ENCODE measurements at regions of chr3 and their contacts with region 1.

Region 1: DNA sequence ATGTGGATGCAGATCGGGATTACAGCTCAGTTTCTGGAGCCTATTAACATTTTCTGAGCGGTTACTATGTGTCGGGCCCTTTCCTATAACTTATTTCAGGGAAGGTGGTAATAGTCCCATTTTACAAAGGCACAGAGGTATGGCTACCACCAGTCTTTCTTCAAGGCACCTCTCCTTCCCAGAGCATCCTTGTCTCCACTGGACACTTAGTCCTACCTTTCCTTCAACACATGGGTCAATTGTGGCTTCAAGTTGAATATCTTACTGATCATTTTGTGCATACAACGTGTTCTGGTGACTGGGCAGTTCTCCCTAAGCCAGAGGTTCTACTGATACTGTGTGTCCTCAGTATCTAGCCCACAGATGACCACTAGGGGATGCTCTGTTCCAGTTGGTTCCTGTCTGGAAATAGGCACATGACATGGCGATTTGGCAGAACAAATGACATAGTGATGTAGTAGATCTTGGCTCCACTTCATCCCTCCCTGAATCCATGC is 60.7 kb upstream of the CMTM8 start:
- DNase-seq: peak in 1 of 2 donors; percentile 84
- ATAC-seq: peak; percentile 77 to 96 (median 89)
- H3K4me3 ChIP-seq: no peak overlapping the region
- H3K27ac ChIP-seq: no peak overlapping the region
- H3K4me1 ChIP-seq: peaks cover 2 to 14% (median 10%) of the 10 kb centered on the region in 9 donors
- H3K27me3 ChIP-seq: no peaks in the 10 kb centered on the region
- CTCF ChIP-seq: peak; percentile 53 to 85 (median 79)

Region 2: DNA sequence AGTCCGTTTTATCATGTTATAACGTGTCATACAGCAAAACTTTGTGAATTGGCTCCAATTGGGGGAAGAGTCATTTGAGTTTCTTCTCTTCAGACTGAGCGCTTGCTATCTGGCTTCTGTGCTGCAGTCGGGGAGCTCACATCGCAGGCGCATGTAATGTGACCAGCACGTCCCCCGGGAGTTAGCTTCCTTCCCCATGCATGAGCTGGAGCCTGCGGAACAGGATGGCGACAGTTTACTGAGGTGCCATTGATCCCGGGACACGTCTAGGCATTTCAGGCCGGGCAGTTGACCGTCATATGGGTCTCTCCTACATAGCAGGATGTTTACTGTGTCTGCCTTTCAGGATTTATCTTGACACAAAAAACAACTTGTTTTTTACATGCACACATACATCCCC is 105.6 kb after region 1 on chr3:
- intact Hi-C with region 1: loop called in 2 of 10 experiments (anchors 5 kb)
- DNase-seq: peak; percentile 54 to 82
- ATAC-seq: peak; percentile 77 to 91 (median 83)
- H3K4me3 ChIP-seq: no peak overlapping the region
- H3K27ac ChIP-seq: peak overlapping the region in 6 of 10 donors; percentile 2 to 71 (median 56)
- H3K4me1 ChIP-seq: peaks cover 0 to 54% (median 21%) of the 10 kb centered on the region in 9 donors
- H3K27me3 ChIP-seq: no peaks in the 10 kb centered on the region
- CTCF ChIP-seq: no peak

Region 3: GRCh38 chr3:32334675-32335074 is 156.9 kb after region 1 on chr3:
- intact Hi-C with region 1: loop called in 2 of 10 experiments (anchors 5 kb)
- DNase-seq: no peak
- ATAC-seq: peak in 1 of 8 donors; percentile 13
- H3K4me3 ChIP-seq: no peak overlapping the region
- H3K27ac ChIP-seq: no peak overlapping the region
- H3K4me1 ChIP-seq: peaks cover 0 to 24% (median 5%) of the 10 kb centered on the region in 9 donors
- H3K27me3 ChIP-seq: no peaks in the 10 kb centered on the region
- CTCF ChIP-seq: peak in 4 of 9 donors; percentile 12 to 37 (median 14)

Region 4: GRCh38 chr3:32391643-32392535 is 214.1 kb after region 1 on chr3 and contains the start of gene CMTM7:
- intact Hi-C with region 1: loop called in 3 of 10 experiments (anchors 5 to 10 kb)
- DNase-seq: peak; percentile 73 to 76
- ATAC-seq: peak; percentile 81 to 95 (median 90)
- H3K4me3 ChIP-seq: peak within 1 kb of the TSS; percentile 58 to 95 (median 76)
- H3K27ac ChIP-seq: peak within 1 kb of the TSS; percentile 31 to 96 (median 86)
- H3K4me1 ChIP-seq: peaks cover 0 to 40% (median 12%) of the 10 kb centered on the region in 9 donors
- H3K27me3 ChIP-seq: no peaks in the 10 kb centered on the region
- CTCF ChIP-seq: peak in 3 of 9 donors; percentile 10 to 23 (median 11)
- total RNA-seq, gene CMTM7: 1.7 to 9.2 (median 2.8) TPM

Region 5: DNA sequence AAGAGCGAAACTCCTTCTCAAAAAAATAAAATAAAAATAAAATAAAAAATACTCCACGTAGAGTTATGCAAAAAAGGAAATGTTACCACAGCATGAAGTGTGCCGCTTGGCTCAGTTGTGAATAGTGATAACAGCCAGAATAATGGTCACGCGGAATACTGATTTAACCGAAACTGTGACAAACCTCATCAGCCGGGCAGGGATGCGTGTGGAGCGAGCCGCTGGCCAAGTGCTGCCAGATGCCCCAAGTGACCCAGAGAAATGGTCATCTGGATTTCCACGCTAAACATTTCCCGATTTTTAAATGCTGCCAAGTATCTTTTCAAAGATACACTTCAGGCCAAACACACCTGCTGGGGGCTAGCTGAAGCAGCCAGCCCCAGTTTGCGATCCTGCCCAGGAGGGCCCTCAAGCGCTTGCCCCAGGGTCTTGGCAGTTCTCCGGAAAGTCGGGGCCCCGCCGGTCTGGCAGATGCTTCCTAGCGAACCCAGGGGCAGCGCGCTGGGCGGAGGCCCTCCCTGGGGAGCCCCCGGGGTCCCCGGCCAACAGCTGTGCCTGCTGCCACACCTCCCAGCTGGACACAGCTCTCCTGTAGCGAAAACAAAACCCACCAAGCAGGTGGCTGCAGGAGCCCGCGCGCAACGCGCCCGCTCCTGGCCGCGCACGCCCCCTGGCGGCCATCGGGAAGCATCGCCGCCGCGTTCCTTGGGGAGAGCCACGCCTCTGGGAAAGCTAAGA is 289.8 kb after region 1 on chr3:
- intact Hi-C with region 1: loop called in 7 of 10 experiments (anchors 2 to 10 kb)
- DNase-seq: peak; percentile 53 to 80
- ATAC-seq: peak; percentile 88 to 96 (median 90)
- H3K4me3 ChIP-seq: peak overlapping the region in 9 of 10 donors; percentile 14 to 53 (median 46)
- H3K27ac ChIP-seq: peak overlapping the region in 3 of 10 donors; percentile 46 to 79 (median 58)
- H3K4me1 ChIP-seq: peaks cover 0 to 55% (median 18%) of the 10 kb centered on the region in 9 donors
- H3K27me3 ChIP-seq: no peaks in the 10 kb centered on the region
- CTCF ChIP-seq: peak; percentile 95 to 100 (median 99)